ENCODE measurements at regions of chr12 and their contacts with region 1.

Region 1: DNA sequence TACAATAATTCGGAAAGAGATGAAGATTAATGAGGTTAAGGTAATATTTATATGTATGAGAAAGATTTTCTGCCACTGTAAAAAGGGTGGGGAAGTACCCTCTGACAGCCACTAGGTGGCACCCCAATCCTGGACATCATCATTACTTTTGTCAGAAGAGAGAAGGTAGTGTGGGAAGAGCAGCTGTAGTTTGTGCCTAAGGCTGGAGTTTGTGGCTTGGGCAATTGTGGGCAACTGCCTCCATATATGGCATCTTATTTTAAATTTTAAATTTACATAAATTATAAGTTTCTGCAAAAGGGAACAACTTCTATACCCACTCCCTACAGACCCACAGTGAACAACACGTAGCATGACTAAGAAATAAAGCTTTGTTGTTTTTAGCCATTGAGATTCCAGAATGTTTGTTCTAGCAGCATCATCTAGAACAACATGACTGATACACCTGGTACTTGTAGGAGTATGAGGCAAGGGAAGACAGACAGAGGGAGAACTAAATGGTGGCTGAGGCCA is 34.4 kb upstream of the SYCP3 start:
- DNase-seq: peak; percentile 18 to 59
- ATAC-seq: peak; percentile 57 to 83 (median 74)
- H3K4me3 ChIP-seq: no peak overlapping the region
- H3K27ac ChIP-seq: no peak overlapping the region
- H3K4me1 ChIP-seq: peaks cover 0 to 40% (median 10%) of the 10 kb centered on the region in 9 donors
- H3K27me3 ChIP-seq: no peaks in the 10 kb centered on the region
- CTCF ChIP-seq: peak; percentile 89 to 98 (median 95)

Region 2: GRCh38 chr12:101407436-101408345 is 366.0 kb before region 1 on chr12 and contains the start of gene ARL1:
- intact Hi-C with region 1: loop called in 3 of 10 experiments (anchors 10 kb)
- DNase-seq: peak; percentile 87 to 89
- ATAC-seq: peak; percentile 92 to 98 (median 96)
- H3K4me3 ChIP-seq: peak within 1 kb of the TSS; percentile 68 to 95 (median 80)
- H3K27ac ChIP-seq: peak within 1 kb of the TSS; percentile 86 to 98 (median 94)
- H3K4me1 ChIP-seq: peaks cover 5 to 33% (median 26%) of the 10 kb centered on the region in 9 donors
- H3K27me3 ChIP-seq: no peaks in the 10 kb centered on the region
- CTCF ChIP-seq: peak in 1 of 9 donors; percentile 10
- total RNA-seq, gene ARL1: 81.5 to 113 (median 95.5) TPM

Region 3: GRCh38 chr12:101414533-101415119 is 359.1 kb before region 1 on chr12:
- intact Hi-C with region 1: loop called in 3 of 10 experiments (anchors 10 kb)
- DNase-seq: peak in 1 of 2 donors; percentile 30
- ATAC-seq: no peak
- H3K4me3 ChIP-seq: no peak overlapping the region
- H3K27ac ChIP-seq: no peak overlapping the region
- H3K4me1 ChIP-seq: no peaks in the 10 kb centered on the region
- H3K27me3 ChIP-seq: no peaks in the 10 kb centered on the region
- CTCF ChIP-seq: peak; percentile 22 to 67 (median 58)

Region 4: DNA sequence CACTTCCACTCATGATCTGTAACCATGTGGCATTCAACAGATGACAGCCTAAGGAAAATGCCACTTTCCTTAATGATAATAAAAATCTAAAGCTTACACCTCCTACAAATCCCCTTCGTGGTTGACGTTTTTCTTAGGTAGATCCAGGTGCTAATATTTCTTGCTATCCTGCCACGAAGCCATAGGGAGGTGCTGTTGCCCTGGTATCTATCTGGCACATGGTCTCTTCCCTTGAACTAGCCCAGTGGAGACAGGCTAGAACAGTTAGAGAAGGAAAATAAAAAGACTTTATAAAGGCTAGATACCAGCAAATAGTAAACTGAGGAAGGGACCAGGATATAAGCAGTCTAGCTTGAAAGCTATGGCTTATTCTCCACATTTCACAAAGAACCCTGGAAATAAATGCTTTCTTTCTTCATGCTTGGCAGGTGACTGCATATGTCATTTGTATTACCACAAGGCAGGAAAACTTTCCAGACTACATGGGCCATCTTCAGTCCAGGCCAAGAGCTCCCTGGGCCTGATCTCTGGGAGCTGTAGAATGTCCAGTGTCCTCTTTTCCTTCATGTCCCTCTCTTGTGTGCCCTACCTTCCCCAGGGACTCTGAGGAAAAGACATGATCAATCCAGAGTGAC is 283.3 kb before region 1 on chr12:
- intact Hi-C with region 1: loop called in 1 of 10 experiments (anchors 5 kb)
- DNase-seq: peak in 1 of 2 donors; percentile 5
- ATAC-seq: peak in 7 of 8 donors; percentile 34 to 80 (median 55)
- H3K4me3 ChIP-seq: no peak overlapping the region
- H3K27ac ChIP-seq: no peak overlapping the region
- H3K4me1 ChIP-seq: peaks cover 0 to 15% (median 0%) of the 10 kb centered on the region in 9 donors
- H3K27me3 ChIP-seq: peaks cover 0 to 10% (median 0%) of the 10 kb centered on the region in 7 donors
- CTCF ChIP-seq: peak in 8 of 9 donors; percentile 9 to 57 (median 47)

Region 5: GRCh38 chr12:101792051-101792931 is 18.6 kb after region 1 on chr12:
- intact Hi-C with region 1: no loop called
- DNase-seq: no peak
- ATAC-seq: peak in 2 of 8 donors; percentile 44 to 57
- H3K4me3 ChIP-seq: no peak overlapping the region
- H3K27ac ChIP-seq: peak overlapping the region in 1 of 10 donors; percentile 31
- H3K4me1 ChIP-seq: peaks cover 0 to 26% (median 0%) of the 10 kb centered on the region in 9 donors
- H3K27me3 ChIP-seq: no peaks in the 10 kb centered on the region
- CTCF ChIP-seq: peak in 7 of 9 donors; percentile 14 to 53 (median 39)